ENCODE measurements at regions of chr17 and their contacts with region 1.

Region 1: DNA sequence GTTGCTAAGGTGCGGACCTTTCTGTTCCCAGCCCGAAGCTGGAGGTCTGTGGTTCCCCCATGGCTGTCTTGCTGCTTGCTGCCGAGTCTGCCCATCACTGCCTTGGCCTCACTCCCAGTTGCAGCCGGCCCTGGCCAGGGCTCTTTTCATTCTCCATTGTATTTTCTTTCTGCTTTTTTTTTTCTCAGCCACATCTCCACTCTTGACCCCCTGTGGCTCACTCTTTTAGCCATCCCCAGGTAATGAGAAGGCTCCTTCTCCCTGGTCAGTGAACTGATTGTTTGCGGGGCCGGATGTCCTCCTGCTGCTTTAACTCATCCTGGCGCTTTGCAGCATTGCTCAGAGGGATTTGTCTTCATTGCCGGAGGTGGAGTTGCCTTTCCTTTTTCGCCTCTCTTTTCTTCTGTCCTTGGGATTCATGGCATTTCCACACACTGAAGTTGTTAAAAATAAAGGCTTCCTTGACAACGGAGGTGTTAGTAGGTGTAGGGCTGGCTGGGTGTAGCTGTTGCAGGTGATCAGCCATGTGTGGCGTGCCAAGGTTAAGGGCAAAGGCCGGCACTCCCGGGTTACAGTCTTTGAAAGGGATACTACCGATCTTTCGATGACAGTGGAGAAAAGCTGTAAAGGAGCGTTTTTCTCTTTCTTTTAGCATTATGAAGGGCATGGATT is 34.1 kb downstream of the MAP2K6 start:
- DNase-seq: peak in 3 of 5 donors; percentile 9 to 52 (median 33)
- ATAC-seq: peak in 2 of 4 donors; percentile 41 to 59
- H3K4me3 ChIP-seq: peak overlapping the region in 3 of 12 donors; percentile 10 to 34 (median 24)
- H3K27ac ChIP-seq: peak overlapping the region in 3 of 12 donors; percentile 15 to 23 (median 21)
- H3K4me1 ChIP-seq: peaks cover 0 to 19% (median 6%) of the 10 kb centered on the region in 12 donors
- H3K27me3 ChIP-seq: no peaks in the 10 kb centered on the region
- CTCF ChIP-seq: no peak
- POLR2A ChIP-seq: no peak

Region 2: GRCh38 chr17:69141431-69142174 is 307.0 kb before region 1 on chr17 and contains the start of gene ABCA6:
- intact Hi-C with region 1: no loop called
- DNase-seq: no peak
- ATAC-seq: peak; percentile 83 to 94 (median 88)
- H3K4me3 ChIP-seq: peak within 1 kb of the TSS in 11 of 12 donors; percentile 1 to 62 (median 39)
- H3K27ac ChIP-seq: peak within 1 kb of the TSS; percentile 41 to 84 (median 63)
- H3K4me1 ChIP-seq: peaks cover 0 to 20% (median 0%) of the 10 kb centered on the region in 12 donors
- H3K27me3 ChIP-seq: no peaks in the 10 kb centered on the region
- CTCF ChIP-seq: no peak
- POLR2A ChIP-seq: peak in 1 of 2 donors; percentile 38
- total RNA-seq, gene ABCA6: 6.3 to 30.1 (median 20.3) TPM

Region 3: DNA sequence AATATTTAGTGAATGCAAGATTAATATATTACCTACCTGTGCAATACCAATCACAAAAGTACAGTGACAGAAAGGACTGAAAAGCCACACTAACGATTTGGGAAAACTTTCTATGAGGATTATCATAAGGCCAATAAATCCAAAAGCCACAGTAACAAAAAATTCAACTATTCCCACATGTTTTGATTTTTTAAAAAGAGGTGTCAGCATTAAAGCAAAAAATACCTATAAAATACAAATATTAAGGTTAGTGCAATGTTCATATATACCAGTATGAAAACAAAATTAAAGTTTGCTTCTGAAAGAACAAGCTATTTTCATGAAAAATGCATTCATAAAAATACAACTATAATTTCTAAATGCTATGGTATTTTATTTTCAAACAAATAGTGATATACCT is 145.9 kb before region 1 on chr17:
- intact Hi-C with region 1: no loop called
- DNase-seq: no peak
- ATAC-seq: no peak
- H3K4me3 ChIP-seq: no peak overlapping the region
- H3K27ac ChIP-seq: no peak overlapping the region
- H3K4me1 ChIP-seq: no peaks in the 10 kb centered on the region
- H3K27me3 ChIP-seq: no peaks in the 10 kb centered on the region
- CTCF ChIP-seq: no peak
- POLR2A ChIP-seq: no peak

Region 4: DNA sequence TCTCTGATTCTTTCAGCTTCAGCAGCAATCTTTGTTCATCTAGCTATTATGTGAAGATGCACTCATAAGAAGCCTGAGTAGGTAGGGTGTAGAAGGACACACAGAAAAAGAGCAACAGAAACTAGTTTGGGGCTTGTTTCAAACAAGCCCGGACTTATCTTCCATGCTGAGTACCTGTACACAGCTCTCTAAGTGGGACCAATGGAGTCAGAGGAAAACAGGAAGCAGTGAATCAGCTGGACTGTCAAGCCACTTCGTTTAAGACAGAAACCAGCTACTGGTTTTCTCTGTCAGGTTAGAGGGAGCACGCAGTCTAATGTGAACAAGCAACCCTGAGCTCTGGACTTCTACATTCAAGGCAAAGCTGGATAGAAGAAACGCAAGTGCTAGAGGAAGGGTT is 18.1 kb before region 1 on chr17:
- intact Hi-C with region 1: no loop called
- DNase-seq: no peak
- ATAC-seq: no peak
- H3K4me3 ChIP-seq: no peak overlapping the region
- H3K27ac ChIP-seq: peak overlapping the region in 1 of 12 donors; percentile 34
- H3K4me1 ChIP-seq: peaks cover 0 to 34% (median 5%) of the 10 kb centered on the region in 12 donors
- H3K27me3 ChIP-seq: no peaks in the 10 kb centered on the region
- CTCF ChIP-seq: no peak
- POLR2A ChIP-seq: no peak

Region 5: DNA sequence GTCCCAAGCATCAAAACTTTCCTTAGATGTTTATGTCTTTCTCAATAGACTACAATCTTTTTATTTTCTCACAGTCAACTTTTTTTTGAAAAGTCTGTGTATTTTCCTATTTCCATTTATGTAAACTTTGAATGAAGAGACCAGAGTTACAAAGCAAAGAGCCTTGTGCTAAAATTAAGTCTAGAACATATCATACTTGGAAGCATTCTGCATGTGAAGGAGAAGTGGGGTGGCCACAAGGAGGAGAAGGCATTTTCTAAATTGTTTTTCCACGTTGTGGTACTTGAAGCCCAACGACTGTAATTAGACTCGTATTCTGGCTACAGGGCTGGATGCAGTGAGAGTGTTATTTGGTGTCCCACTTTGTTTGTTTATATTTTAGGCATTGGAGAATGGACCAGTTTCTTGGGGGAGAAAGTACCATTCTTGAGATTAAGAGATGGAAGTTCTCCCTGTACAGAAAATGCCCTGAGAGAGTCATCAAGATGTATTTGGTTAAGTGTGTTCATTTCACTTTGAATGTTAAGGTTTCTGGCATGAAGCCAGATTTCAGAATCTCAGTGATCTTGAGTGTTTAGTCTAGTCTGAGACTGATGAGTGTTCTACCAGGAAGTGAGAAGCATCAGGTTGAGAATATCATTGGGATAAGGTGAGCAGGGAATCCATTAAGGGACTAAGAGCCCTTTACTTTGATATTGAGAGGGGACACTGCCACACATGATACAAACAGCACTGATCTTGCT is 37.5 kb after region 1 on chr17:
- intact Hi-C with region 1: loop called in 1 of 10 experiments (anchors 5 kb)
- DNase-seq: no peak
- ATAC-seq: peak in 3 of 4 donors; percentile 36 to 48 (median 44)
- H3K4me3 ChIP-seq: peak overlapping the region in 1 of 12 donors; percentile 24
- H3K27ac ChIP-seq: peak overlapping the region; percentile 6 to 83 (median 42)
- H3K4me1 ChIP-seq: peaks cover 0 to 26% (median 13%) of the 10 kb centered on the region in 12 donors
- H3K27me3 ChIP-seq: no peaks in the 10 kb centered on the region
- CTCF ChIP-seq: peak in 1 of 12 donors; percentile 10
- POLR2A ChIP-seq: no peak

Measured in heart left ventricle (tissue), 16 donors.